HEK293 (cell line): ENCODE measurements at regions of chr22 and their contacts with region 1.

Region 1: DNA sequence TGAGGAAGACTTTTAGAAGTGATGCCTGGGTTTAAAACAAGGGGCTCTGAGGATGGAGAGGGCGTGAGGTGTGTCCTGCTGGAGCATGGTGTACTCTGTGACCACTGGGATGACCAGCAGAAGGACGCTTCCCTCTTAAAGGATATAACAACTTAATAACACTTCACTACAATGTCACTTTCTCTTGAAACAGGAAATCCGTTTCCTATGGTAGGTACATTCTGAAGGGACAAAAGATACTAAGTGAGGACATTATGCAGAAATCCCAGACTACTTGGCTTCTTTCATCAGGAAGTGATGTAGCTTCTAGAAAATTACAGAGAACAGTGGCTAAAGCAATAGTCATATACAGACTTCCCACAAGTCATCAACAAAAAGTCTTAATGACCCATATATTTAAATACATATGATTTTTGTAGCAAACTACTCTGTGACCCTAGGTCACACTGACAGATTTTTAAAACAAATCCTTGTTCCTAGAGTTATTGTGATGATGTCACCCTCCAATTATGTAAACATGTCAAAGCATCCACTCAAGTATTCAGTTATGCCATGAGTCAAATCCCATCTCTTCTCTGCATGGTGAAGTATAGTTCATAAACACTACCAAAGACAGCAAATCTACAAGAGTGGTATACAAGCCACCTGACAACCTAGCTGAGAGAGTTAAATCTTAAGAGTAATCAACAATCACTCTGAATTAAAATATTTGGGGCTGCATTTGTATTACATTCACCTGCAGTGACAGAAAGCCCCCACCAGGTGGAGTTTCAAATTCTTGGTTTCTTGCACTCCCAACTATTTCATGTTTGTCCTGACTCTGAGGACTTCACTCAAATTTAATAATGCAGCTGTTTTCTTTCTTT is 32.8 kb downstream of the PITPNB start:
- H3K4me3 ChIP-seq: no peak overlapping the region
- H3K27ac ChIP-seq: no peak overlapping the region
- H3K4me1 ChIP-seq: 0 out of 2 replicates have a peak, but pooled peaks cover 5% of the 10 kb centered on the region
- CTCF ChIP-seq: no peak

Region 2: GRCh38 chr22:27866132-27867086 is 19.8 kb before region 1 on chr22:
- CTCF ChIA-PET with region 1: interaction called, 18 read pairs
- POLR2A ChIA-PET with region 1: no interaction called
- H3K4me3 ChIP-seq: no peak overlapping the region
- H3K27ac ChIP-seq: no peak overlapping the region
- H3K4me1 ChIP-seq: peaks cover 23% of the 10 kb centered on the region
- CTCF ChIP-seq: no peak

Region 3: DNA sequence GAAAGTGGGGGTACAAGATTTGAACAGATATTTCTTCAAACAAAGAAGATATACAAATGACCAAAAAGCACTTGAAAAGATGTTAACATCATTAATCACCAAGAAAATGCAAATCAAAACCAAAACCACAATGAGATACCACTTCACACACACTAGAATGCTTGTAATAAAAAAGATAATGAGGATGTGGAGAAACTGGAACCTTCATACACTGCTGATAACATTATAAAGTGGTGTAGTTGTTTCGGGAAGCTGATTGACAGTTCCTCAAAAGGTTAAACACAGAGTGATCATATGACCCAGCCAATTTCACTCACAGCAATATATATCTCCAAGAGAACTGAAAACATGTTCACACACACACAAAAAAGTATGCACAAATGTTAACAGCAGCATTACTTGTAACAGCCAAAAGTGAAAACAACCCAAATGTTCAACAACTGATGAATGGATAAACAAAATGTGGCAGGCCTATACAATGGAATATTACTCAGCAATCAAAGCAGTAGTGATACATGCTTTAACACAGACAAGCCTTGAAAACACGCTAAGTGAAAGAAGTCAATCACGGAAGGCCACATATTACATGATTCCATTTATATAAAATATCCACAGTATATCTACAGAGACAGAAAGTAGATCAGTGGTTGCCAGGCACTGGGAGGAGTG is 17.7 kb after region 1 on chr22:
- CTCF ChIA-PET with region 1: interaction called, 40 read pairs
- POLR2A ChIA-PET with region 1: interaction called, 9 read pairs
- H3K4me3 ChIP-seq: no peak overlapping the region
- H3K27ac ChIP-seq: no peak overlapping the region
- H3K4me1 ChIP-seq: no peaks in the 10 kb centered on the region
- CTCF ChIP-seq: no peak

Region 4: GRCh38 chr22:27919222-27919941 is 33.2 kb after region 1 on chr22 and contains the start of gene PITPNB:
- CTCF ChIA-PET with region 1: interaction called, 90 read pairs
- POLR2A ChIA-PET with region 1: interaction called, 5 read pairs
- H3K4me3 ChIP-seq: peak within 1 kb of the TSS; percentile 72
- H3K27ac ChIP-seq: peak within 1 kb of the TSS; percentile 98
- H3K4me1 ChIP-seq: peaks cover 29% of the 10 kb centered on the region
- CTCF ChIP-seq: no peak

Region 5: GRCh38 chr22:27937453-27937852 is 51.2 kb after region 1 on chr22:
- CTCF ChIA-PET with region 1: interaction called, 13 read pairs
- POLR2A ChIA-PET with region 1: no interaction called
- H3K4me3 ChIP-seq: no peak overlapping the region
- H3K27ac ChIP-seq: no peak overlapping the region
- H3K4me1 ChIP-seq: peaks cover 6% of the 10 kb centered on the region; the same call in 1 of the 2 replicates
- CTCF ChIP-seq: no peak

Region 6: DNA sequence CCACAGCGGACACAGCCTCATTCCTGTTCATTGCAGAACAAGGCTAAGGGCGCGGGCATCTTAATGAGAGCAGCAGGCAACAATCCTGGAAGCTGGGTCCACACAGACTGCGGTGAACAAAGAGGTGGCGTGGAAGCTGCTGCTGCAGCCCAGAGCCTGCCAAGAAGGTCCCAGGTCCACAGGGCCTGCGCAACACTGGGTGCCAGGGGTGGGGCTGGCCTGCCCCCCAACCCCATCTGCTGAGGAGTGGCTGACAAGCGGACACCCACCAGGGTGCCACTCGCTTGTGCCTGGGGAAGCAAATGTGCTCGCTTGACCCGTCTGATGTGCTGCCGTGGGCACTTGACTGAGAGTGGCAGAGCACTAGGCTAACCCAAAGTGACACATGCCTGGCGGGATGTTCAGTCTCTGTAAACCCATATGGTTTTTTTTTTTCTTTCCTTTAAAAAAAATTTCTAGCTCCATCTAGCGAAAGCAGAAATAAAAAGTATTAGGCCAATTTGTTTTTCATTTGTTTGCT is 116.0 kb after region 1 on chr22:
- CTCF ChIA-PET with region 1: interaction called, 61 read pairs
- POLR2A ChIA-PET with region 1: no interaction called
- H3K4me3 ChIP-seq: no peak overlapping the region
- H3K27ac ChIP-seq: no peak overlapping the region
- H3K4me1 ChIP-seq: no peaks in the 10 kb centered on the region
- CTCF ChIP-seq: no peak

Region 7: DNA sequence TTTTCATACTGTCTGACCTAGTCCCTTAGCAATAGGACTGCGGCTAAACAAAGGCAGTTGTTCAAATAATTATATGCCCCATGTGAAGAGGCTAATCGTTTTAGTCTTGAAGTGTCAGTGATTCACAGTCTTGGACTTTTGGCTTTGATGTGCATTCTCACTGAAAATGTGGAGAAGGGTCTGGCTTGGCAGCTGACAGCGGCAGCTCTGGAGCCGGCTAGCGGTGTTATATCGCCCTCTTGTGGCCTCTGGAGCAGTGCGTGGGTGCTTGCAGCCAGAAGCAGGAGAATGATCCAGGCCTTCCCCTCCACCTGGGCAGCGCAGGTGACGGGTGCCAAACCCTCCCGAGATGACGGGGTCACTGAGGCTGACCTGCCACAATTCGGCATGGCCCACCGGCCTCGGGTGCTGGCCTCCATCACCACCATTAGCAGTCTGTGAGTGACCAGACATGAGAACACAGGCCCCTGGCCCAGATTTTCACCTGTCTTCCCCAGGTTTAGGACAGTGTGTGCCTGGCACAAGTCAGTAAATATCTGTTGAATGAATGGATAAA is 123.1 kb after region 1 on chr22:
- CTCF ChIA-PET with region 1: interaction called, 61 read pairs
- POLR2A ChIA-PET with region 1: no interaction called
- H3K4me3 ChIP-seq: no peak overlapping the region
- H3K27ac ChIP-seq: no peak overlapping the region
- H3K4me1 ChIP-seq: no peaks in the 10 kb centered on the region
- CTCF ChIP-seq: peak; percentile 93